Spleen (tissue), 13 donors: ENCODE measurements at regions of chr3 and their contacts with region 1.

Region 1: GRCh38 chr3:19946832-19947548 is at the start of gene RAB5A:
- DNase-seq: peak; percentile 99
- H3K4me3 ChIP-seq: peak within 1 kb of the TSS; percentile 79 to 94 (median 88)
- H3K27ac ChIP-seq: peak within 1 kb of the TSS; percentile 91 to 99 (median 98)
- H3K4me1 ChIP-seq: peaks cover 35 to 57% (median 41%) of the 10 kb centered on the region in 6 donors
- H3K27me3 ChIP-seq: no peaks in the 10 kb centered on the region
- CTCF ChIP-seq: peak in 6 of 11 experiments; percentile 2 to 45 (median 22)
- POLR2A ChIP-seq: peak; percentile 17 to 79 (median 71)
- total RNA-seq, gene RAB5A: 58.5 to 83.1 (median 64.3) TPM

Region 2: DNA sequence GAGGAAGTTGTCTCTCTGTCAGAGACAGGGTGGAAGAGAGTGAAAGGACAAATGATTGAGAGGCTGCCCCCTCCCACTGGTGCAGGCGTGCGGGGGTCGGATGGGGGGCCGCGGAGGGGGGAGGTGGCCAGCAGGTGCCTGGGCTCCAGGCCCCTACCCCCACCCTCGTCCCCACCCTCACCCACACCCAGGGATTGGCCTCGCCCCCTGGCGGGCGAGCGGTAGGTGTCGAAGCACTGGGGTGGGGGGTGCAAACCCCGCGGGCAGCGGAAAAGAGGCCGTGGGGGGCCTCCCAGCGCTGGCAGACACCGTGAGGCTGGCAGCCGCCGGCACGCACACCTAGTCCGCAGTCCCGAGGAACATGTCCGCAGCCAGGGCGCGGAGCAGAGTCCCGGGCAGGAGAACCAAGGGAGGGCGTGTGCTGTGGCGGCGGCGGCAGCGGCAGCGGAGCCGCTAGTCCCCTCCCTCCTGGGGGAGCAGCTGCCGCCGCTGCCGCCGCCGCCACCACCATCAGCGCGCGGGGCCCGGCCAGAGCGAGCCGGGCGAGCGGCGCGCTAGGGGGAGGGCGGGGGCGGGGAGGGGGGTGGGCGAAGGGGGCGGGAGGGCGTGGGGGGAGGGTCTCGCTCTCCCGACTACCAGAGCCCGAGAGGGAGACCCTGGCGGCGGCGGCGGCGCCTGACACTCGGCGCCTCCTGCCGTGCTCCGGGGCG is 92.9 kb after region 1 on chr3 and contains the start of gene KAT2B:
- intact Hi-C with region 1: loop called (anchors 10 kb)
- DNase-seq: peak; percentile 97
- H3K4me3 ChIP-seq: peak within 1 kb of the TSS; percentile 66 to 93 (median 82)
- H3K27ac ChIP-seq: peak within 1 kb of the TSS; percentile 74 to 99 (median 98)
- H3K4me1 ChIP-seq: peaks cover 36 to 59% (median 45%) of the 10 kb centered on the region in 6 donors
- H3K27me3 ChIP-seq: no peaks in the 10 kb centered on the region
- CTCF ChIP-seq: peak; percentile 55 to 90 (median 84)
- POLR2A ChIP-seq: peak in 2 of 3 donors; percentile 45 to 58
- total RNA-seq, gene KAT2B: 39.1 to 64.3 (median 58.0) TPM

Region 3: DNA sequence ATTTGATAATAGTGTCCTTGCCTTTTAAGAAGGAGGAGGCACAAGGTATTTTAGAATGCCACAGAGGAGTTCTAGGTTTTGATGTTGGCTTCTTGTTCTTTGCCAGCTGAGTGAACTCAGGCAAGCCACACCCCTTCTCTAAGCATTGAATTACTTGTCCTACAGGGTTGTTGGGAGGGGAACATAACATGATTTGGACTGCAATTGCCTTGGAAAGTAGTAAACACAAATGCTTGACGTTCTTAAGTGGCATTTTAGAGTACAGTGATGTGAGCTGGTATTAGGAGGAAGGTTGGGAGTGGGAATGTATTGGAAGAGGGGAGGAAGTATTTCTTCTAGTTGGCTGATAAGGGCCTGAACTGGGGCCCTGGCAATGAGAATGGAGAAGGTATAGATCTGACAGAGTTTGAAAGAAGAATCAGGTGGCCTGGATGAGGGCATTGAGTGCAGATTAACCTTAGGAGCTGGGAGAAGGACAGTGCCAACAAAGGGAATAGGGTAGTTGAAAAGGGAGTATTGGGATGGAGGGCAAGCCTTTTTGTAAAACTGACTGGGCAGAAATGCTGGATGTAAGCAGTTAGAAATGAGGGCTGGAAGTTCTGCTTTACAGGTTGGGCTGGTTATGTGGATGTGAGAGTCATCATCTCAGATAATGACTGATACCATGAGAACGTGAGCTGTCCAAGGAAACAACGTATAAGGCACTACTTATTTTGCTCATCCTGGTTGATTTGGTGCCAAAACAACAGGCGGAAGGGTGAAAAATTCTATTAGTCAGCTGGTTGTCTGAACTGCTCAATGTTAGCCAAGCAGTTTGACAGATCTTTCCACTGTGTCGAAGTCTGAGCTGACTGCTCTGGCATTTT is 110.0 kb after region 1 on chr3:
- intact Hi-C with region 1: no loop called
- DNase-seq: no peak
- H3K4me3 ChIP-seq: no peak overlapping the region
- H3K27ac ChIP-seq: peak overlapping the region in 7 of 8 donors; percentile 30 to 87 (median 79)
- H3K4me1 ChIP-seq: peaks cover 36 to 93% (median 69%) of the 10 kb centered on the region in 6 donors
- H3K27me3 ChIP-seq: no peaks in the 10 kb centered on the region
- CTCF ChIP-seq: no peak
- POLR2A ChIP-seq: no peak